Pancreas (tissue), 10 donors: ENCODE measurements at regions of chr9 and their contacts with region 1.

Region 1: DNA sequence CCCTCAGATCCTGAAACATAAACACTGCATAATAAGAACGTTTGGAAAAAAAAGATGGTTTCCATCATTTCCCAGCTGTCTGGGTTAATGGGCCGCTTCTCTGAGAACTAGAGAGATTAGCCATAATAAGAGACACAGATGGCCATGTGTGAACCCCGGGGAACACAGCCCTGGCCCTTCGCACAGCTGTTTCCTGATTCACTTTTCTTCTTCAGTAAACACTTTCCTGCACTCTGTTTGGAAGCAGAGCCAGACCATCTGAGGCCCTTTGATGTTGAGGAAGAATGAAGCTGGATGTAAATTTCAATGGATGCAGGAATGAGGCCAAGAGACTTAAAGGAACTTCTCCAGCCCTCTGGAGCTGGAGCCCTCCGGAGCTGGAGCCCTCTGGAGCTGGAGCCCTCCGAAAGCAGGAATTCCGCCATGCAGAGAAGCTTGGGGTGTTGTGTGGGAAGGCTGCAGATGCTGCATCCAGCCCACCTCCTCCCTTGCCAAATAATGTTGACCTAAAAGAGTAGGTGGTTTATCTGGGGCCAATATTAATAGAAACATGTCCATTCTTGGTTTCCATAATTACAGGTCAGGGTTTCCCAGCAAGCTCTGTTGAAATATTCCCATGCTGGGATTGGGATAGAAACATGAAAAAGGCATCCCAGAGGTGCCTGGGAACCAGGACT is 218.9 kb downstream of the NXNL2 start:
- DNase-seq: no peak
- ATAC-seq: peak in 2 of 4 donors; percentile 17 to 66
- H3K4me3 ChIP-seq: no peak overlapping the region
- H3K27ac ChIP-seq: no peak overlapping the region
- H3K4me1 ChIP-seq: peaks cover 0 to 3% (median 0%) of the 10 kb centered on the region in 3 donors
- H3K27me3 ChIP-seq: no peaks in the 10 kb centered on the region
- CTCF ChIP-seq: no peak

Region 2: DNA sequence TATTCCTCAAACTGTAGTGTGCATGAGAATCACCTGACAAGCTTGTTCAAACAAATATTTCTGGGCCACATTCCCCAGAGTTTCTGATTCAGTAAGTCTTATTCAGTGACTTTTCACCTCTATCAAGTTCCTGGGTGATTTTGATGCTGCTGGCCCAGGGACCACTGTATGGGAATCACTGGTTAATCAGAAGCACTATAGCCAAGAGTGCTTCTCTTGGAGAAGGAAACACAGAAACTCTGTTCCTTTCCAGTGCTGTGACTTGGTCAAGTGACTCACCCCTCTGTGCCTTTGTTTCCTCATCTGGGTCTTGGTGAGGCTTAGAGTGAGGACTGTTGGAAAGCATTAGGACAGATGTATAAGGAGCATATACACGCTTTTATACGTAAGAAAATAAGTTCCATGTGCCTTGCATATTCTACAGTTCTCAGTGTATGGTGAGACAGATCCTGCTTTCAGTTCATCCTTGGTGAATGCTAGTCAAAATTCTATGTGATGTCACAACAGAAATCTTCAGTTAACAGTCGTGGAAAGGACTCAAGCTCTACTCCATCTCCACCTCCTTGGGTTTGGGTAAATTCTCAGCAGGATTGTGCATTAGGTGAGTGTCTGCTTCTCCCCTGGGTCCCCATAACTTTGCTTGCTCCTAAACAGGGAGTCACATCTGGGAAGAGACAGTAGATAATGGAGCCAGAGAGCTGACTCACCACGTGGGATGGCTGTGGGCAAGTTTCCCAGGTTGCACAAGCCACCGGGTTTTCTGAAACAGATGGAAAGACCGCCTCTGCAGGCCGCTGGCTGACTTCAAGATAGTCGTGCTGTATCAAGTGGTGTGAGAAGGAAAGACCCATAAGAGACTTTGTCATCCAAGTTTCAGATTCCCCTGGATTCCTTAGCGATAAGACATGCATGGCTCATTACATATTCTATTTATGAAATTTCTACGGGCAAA is 101.9 kb before region 1 on chr9:
- intact Hi-C with region 1: no loop called
- DNase-seq: peak in 4 of 6 donors; percentile 13 to 41 (median 36)
- ATAC-seq: peak in 3 of 4 donors; percentile 55 to 75 (median 66)
- H3K4me3 ChIP-seq: no peak overlapping the region
- H3K27ac ChIP-seq: no peak overlapping the region
- H3K4me1 ChIP-seq: no peaks in the 10 kb centered on the region
- H3K27me3 ChIP-seq: no peaks in the 10 kb centered on the region
- CTCF ChIP-seq: no peak

Region 3: GRCh38 chr9:88814577-88814976 is 60.7 kb after region 1 on chr9:
- intact Hi-C with region 1: loop called in 1 of 3 experiments (anchors 10 kb)
- DNase-seq: no peak
- ATAC-seq: no peak
- H3K4me3 ChIP-seq: no peak overlapping the region
- H3K27ac ChIP-seq: no peak overlapping the region
- H3K4me1 ChIP-seq: no peaks in the 10 kb centered on the region
- H3K27me3 ChIP-seq: no peaks in the 10 kb centered on the region
- CTCF ChIP-seq: no peak